Heart left ventricle (tissue), 16 donors: ENCODE measurements at regions of chr9 and their contacts with region 1.

Region 1: GRCh38 chr9:114004221-114004716 is 73.8 kb downstream of the AMBP start:
- DNase-seq: peak; percentile 77 to 87 (median 78)
- ATAC-seq: peak; percentile 80 to 96 (median 90)
- H3K4me3 ChIP-seq: peak overlapping the region in 7 of 12 donors; percentile 6 to 34 (median 18)
- H3K27ac ChIP-seq: peak overlapping the region; percentile 10 to 85 (median 70)
- H3K4me1 ChIP-seq: peaks cover 0 to 27% (median 18%) of the 10 kb centered on the region in 12 donors
- H3K27me3 ChIP-seq: no peaks in the 10 kb centered on the region
- CTCF ChIP-seq: no peak
- POLR2A ChIP-seq: no peak

Region 2: DNA sequence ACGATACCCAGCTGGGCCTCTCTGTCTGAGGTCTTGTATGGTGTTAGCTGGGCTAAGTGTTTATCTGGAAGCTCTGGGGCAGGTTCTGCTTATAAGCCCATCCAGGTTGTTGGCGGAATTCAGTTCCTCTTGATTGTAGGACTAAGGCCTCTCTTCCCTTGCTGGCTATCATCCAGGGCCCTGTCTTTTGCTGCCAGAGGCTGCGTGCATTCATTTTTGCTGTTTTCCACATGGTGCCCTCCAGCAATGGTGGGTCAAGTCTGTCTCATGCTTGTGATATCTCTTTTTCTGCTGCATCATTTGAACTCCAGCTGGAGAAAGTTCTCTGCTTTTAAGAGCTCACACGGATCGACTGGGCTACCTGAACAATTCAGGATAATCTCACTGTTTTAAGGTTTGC is 233.9 kb before region 1 on chr9:
- intact Hi-C with region 1: no loop called
- DNase-seq: no peak
- ATAC-seq: no peak
- H3K4me3 ChIP-seq: no peak overlapping the region
- H3K27ac ChIP-seq: no peak overlapping the region
- H3K4me1 ChIP-seq: peaks cover 0 to 16% (median 6%) of the 10 kb centered on the region in 12 donors
- H3K27me3 ChIP-seq: no peaks in the 10 kb centered on the region
- CTCF ChIP-seq: no peak
- POLR2A ChIP-seq: no peak

Region 3: DNA sequence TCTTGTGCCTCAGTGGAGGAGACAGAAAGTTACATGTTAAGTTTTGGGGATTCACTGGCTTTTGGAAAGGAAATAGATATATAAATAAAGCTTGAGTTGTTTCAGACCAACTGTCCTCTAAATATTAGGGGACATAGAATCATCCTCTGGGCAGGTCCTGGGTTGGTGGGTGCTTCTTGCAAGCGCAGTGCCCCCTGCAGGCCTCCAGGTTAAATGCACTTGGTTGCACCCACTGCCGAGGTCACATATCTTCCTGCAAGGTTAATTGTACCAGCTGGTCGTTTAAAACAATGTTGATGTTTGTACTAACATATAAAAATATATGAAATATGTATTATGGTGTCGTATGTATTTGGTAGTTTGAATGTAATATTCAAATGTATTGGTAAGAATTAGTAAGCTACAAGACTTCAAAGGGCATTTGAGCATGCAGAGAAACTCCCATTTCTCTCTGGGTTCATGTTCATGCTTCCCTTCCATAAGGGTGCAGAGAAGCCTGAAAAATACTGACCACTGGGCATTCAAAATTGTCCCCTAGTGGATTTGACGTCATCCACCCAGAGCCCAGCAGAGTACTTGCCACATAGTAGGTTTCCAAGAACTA is 41.1 kb before region 1 on chr9:
- intact Hi-C with region 1: no loop called
- DNase-seq: peak in 1 of 5 donors; percentile 26
- ATAC-seq: no peak
- H3K4me3 ChIP-seq: no peak overlapping the region
- H3K27ac ChIP-seq: no peak overlapping the region
- H3K4me1 ChIP-seq: peaks cover 0 to 4% (median 0%) of the 10 kb centered on the region in 12 donors
- H3K27me3 ChIP-seq: no peaks in the 10 kb centered on the region
- CTCF ChIP-seq: peak; percentile 23 to 72 (median 56)
- POLR2A ChIP-seq: no peak

Region 4: GRCh38 chr9:114061830-114062474 is 57.7 kb after region 1 on chr9:
- intact Hi-C with region 1: loop called in 1 of 10 experiments (anchors 10 kb)
- DNase-seq: no peak
- ATAC-seq: no peak
- H3K4me3 ChIP-seq: no peak overlapping the region
- H3K27ac ChIP-seq: no peak overlapping the region
- H3K4me1 ChIP-seq: peaks cover 0 to 17% (median 5%) of the 10 kb centered on the region in 12 donors
- H3K27me3 ChIP-seq: peaks cover 0 to 5% (median 0%) of the 10 kb centered on the region in 9 donors
- CTCF ChIP-seq: no peak
- POLR2A ChIP-seq: no peak